ENCODE measurements at regions of chr6 and their contacts with region 1.

Region 1: GRCh38 chr6:110682460-110682853 is 132.8 kb downstream of the CDK19 start:
- DNase-seq: peak; percentile 85
- ATAC-seq: peak; percentile 98
- H3K4me3 ChIP-seq: peak overlapping the region in 1 of 3 experiments; percentile 6; a peak in 1 of 6 replicates
- H3K27ac ChIP-seq: peak overlapping the region; percentile 49
- H3K4me1 ChIP-seq: peaks cover 31% of the 10 kb centered on the region
- H3K27me3 ChIP-seq: no peaks in the 10 kb centered on the region
- CTCF ChIP-seq: peak; percentile 87
- EP300 ChIP-seq: no peak
- POLR2A ChIP-seq: no peak
- RAD21 ChIP-seq: peak; percentile 63; the same call in 1 of the 2 replicates

Region 2: DNA sequence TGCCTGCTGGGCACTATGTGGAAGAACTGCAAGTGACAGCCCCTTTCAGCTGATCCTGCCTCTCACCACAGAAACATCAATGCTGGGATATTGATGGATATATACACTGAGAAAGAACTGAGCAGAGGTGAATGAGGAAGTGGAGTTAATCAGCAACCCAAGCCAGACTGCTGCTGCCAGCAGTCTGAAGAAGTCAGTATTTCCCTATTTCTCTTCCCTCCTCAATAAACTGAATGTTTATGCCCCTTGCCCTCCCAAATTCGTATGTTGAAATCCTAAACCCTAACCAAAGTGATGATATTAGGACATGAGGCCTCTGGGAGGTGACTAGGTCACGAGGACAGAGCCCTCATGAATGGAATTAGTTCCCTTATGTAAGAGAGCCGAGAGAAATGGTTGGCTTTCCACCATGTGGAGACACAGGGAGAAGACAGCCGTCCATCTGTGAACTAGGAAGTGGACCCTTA is 56.5 kb after region 1 on chr6:
- CTCF ChIA-PET with region 1: no interaction called
- POLR2A ChIA-PET with region 1: no interaction called
- in situ Hi-C with region 1: no loop called
- intact Hi-C with region 1: loop called (anchors 10 kb)
- DNase-seq: peak; percentile 86
- ATAC-seq: peak; percentile 99
- H3K4me3 ChIP-seq: peak overlapping the region in 2 of 3 experiments; percentile 23 to 24; a peak in 4 of 6 replicates
- H3K27ac ChIP-seq: peak overlapping the region; percentile 71
- H3K4me1 ChIP-seq: peaks cover 39% of the 10 kb centered on the region
- H3K27me3 ChIP-seq: no peaks in the 10 kb centered on the region
- CTCF ChIP-seq: peak; percentile 29
- EP300 ChIP-seq: peak in 1 of 2 experiments; percentile 56; a peak in 2 of 4 replicates
- POLR2A ChIP-seq: peak in 1 of 2 experiments; percentile 38; a peak in 1 of 4 replicates
- RAD21 ChIP-seq: no peak

Region 3: GRCh38 chr6:110949679-110950285 is 267.3 kb after region 1 on chr6:
- CTCF ChIA-PET with region 1: interaction called, 4 read pairs
- POLR2A ChIA-PET with region 1: interaction called, 4 read pairs
- in situ Hi-C with region 1: no loop called
- intact Hi-C with region 1: loop called (anchors 1 kb)
- DNase-seq: no peak
- ATAC-seq: no peak
- H3K4me3 ChIP-seq: no peak overlapping the region
- H3K27ac ChIP-seq: no peak overlapping the region
- H3K4me1 ChIP-seq: peaks cover 45% of the 10 kb centered on the region
- H3K27me3 ChIP-seq: no peaks in the 10 kb centered on the region
- CTCF ChIP-seq: peak; percentile 23; the same call in 1 of the 2 replicates
- EP300 ChIP-seq: no peak
- POLR2A ChIP-seq: no peak
- RAD21 ChIP-seq: no peak

Region 4: DNA sequence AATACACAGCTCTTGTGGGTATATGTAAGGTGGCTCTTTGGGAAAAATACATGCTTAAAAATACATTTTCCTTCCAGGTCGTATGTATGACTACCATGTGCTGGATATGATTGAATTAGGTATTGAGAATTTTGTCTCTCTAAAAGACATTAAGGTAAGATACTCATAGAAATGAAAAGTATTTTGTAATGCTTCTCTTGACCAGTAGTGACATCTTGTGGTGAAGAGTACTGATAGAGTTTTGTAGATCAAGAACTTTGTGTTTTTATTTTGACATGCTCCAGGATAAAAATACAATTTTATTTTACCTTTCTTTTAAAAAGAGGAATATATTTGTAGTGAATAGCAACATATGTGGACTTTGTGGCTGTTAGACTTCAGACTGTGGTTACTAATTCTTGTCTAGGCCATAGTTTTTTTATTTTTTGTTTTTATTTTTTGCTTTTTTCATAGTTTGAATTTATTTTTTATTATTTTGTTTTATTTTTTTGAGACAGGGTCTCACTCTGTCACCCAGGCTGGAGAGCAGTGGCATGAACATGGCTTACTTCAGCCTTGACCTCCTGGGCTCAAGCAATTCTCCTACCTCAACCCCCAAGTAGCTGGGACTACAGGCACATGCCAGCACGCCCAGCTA is 317.3 kb after region 1 on chr6:
- CTCF ChIA-PET with region 1: no interaction called
- POLR2A ChIA-PET with region 1: no interaction called
- in situ Hi-C with region 1: loop called (anchors 25 kb)
- intact Hi-C with region 1: loop called (anchors 1 kb)
- DNase-seq: peak; percentile 22
- ATAC-seq: no peak
- H3K4me3 ChIP-seq: no peak overlapping the region
- H3K27ac ChIP-seq: no peak overlapping the region
- H3K4me1 ChIP-seq: peaks cover 3% of the 10 kb centered on the region
- H3K27me3 ChIP-seq: no peaks in the 10 kb centered on the region
- CTCF ChIP-seq: peak; percentile 45
- EP300 ChIP-seq: no peak
- POLR2A ChIP-seq: no peak
- RAD21 ChIP-seq: 0 out of 2 replicates have a peak, but pooled peaks have one; percentile 36

Measured in HepG2 (cell line).